CD4-positive, alpha-beta T cell (primary cell): ENCODE measurements at regions of chr5 and their contacts with region 1.

Region 1: GRCh38 chr5:32276173-32276853 is 36.4 kb downstream of the MTMR12 start:
- DNase-seq: peak in 3 of 14 experiments; percentile 44 to 56 (median 51)
- ATAC-seq: peak; percentile 81
- H3K4me3 ChIP-seq: no peak overlapping the region
- H3K4me3 Mint-ChIP-seq: peak overlapping the region; percentile 54
- H3K27ac ChIP-seq: peak overlapping the region in 1 of 2 donors; percentile 35
- H3K27ac Mint-ChIP-seq: peak overlapping the region; percentile 78
- H3K4me1 ChIP-seq: peaks cover 13% of the 10 kb centered on the region
- H3K4me1 Mint-ChIP-seq: peaks cover 43% of the 10 kb centered on the region
- H3K27me3 ChIP-seq: no peaks in the 10 kb centered on the region
- H3K27me3 Mint-ChIP-seq: no peaks in the 10 kb centered on the region
- CTCF ChIP-seq: no peak

Region 2: DNA sequence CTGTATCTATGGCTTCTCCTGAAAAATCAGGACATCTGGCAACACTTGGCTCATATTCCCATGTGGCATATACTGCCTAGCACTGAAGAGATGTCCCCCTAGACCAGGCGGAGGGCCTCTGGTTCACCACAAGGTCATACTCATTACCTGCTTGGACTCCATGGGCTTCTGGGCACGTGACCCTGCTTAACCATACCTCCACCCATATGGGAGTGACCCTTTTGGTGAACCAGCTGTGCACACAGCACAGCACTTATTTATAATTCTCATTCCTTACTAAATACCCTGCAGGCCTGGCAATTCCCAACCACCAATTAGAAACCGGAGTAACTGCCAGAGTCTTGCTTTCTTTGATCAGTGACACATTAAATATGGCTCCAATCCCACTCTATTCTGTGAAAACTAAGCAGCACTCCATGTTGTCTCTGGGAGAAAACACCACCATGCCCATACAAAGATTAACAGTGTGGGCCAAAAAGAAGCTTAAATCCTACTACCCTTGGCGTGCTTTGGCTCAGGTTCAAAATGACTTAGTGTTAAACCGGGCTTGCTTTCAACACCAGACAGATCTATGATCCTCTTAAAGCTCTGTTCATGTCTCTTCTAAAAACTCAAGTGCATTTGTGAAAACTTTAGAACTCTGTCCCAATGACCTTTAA is 21.3 kb before region 1 on chr5:
- CTCF ChIA-PET with region 1: no interaction called
- POLR2A ChIA-PET with region 1: no interaction called
- intact Hi-C with region 1: no loop called
- DNase-seq: no peak
- ATAC-seq: no peak
- H3K4me3 ChIP-seq: no peak overlapping the region
- H3K4me3 Mint-ChIP-seq: no peak overlapping the region
- H3K27ac ChIP-seq: no peak overlapping the region
- H3K27ac Mint-ChIP-seq: no peak overlapping the region
- H3K4me1 ChIP-seq: no peaks in the 10 kb centered on the region
- H3K4me1 Mint-ChIP-seq: no peaks in the 10 kb centered on the region
- H3K27me3 ChIP-seq: no peaks in the 10 kb centered on the region
- H3K27me3 Mint-ChIP-seq: no peaks in the 10 kb centered on the region
- CTCF ChIP-seq: no peak

Region 3: GRCh38 chr5:32312647-32313523 is 36.6 kb after region 1 on chr5 and contains the start of gene MTMR12:
- CTCF ChIA-PET with region 1: no interaction called
- POLR2A ChIA-PET with region 1: no interaction called
- intact Hi-C with region 1: loop called in 1 of 2 experiments (anchors 5 kb)
- DNase-seq: peak; percentile 99 to 100 (median 100)
- ATAC-seq: peak; percentile 92
- H3K4me3 ChIP-seq: peak within 1 kb of the TSS; percentile 87
- H3K4me3 Mint-ChIP-seq: peak within 1 kb of the TSS; percentile 91
- H3K27ac ChIP-seq: peak within 1 kb of the TSS; percentile 65 to 78
- H3K27ac Mint-ChIP-seq: peak within 1 kb of the TSS; percentile 93
- H3K4me1 ChIP-seq: peaks cover 35% of the 10 kb centered on the region
- H3K4me1 Mint-ChIP-seq: peaks cover 43% of the 10 kb centered on the region
- H3K27me3 ChIP-seq: no peaks in the 10 kb centered on the region
- H3K27me3 Mint-ChIP-seq: no peaks in the 10 kb centered on the region
- CTCF ChIP-seq: no peak
- total RNA-seq, gene MTMR12: 15.9 to 18.3 TPM

Region 4: DNA sequence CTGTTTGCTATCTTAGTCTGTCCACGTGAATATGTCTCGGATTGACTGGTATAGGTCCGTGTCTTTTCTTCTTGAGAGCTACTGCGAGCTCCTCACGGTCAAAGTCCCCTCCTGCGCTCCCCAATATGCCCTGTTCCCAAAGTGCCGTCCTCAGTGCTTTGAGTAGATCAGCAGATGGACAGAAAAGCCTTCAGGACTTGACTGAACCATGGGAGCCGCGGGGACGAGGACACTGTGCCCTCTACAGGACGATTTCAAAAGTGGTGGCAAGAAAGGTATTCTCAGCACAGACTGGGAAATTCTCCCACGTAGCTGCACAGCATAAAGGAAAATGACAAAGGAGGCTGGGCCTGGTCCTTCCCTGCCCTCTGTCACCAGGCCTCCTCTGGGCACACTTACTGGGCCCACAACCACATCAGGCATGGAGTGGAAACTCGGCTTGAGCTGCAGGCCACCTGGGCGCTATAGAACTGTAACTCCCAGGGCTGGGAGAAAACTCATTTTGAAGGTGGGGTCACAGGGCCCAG is 53.1 kb after region 1 on chr5:
- CTCF ChIA-PET with region 1: no interaction called
- POLR2A ChIA-PET with region 1: no interaction called
- intact Hi-C with region 1: loop called in 1 of 2 experiments (anchors 5 kb)
- DNase-seq: peak; percentile 14 to 74 (median 42)
- ATAC-seq: peak; percentile 77
- H3K4me3 ChIP-seq: no peak overlapping the region
- H3K4me3 Mint-ChIP-seq: no peak overlapping the region
- H3K27ac ChIP-seq: no peak overlapping the region
- H3K27ac Mint-ChIP-seq: no peak overlapping the region
- H3K4me1 ChIP-seq: peaks cover 4% of the 10 kb centered on the region
- H3K4me1 Mint-ChIP-seq: no peaks in the 10 kb centered on the region
- H3K27me3 ChIP-seq: no peaks in the 10 kb centered on the region
- H3K27me3 Mint-ChIP-seq: no peaks in the 10 kb centered on the region
- CTCF ChIP-seq: peak; percentile 67